ENCODE measurements at regions of chr1 and their contacts with region 1.

Region 1: DNA sequence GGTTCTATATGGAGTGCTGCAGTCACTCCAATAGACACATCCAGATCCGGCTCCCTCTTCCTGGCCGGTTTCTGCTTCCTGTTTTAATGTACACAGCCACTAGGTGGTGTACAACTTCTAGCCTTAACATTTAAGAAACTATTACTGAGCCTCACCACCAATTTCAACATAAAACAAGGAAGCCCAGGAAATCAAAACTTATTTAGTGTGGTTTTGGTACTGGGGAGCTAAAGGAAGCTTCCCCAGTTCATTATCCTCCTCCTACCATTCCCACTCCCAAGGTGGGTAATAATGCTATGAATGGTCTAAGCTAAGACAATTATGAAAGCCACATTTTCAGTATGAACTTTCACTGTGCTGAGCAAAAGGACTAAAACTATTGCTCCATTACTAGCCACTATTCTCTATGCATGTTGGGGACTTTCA is 25.5 kb upstream of the MTMR11 start:
- DNase-seq: peak; percentile 52
- ATAC-seq: peak; percentile 71
- H3K4me3 Mint-ChIP-seq: no peak overlapping the region
- H3K27ac Mint-ChIP-seq: no peak overlapping the region
- H3K4me1 Mint-ChIP-seq: peaks cover 13% of the 10 kb centered on the region
- H3K27me3 Mint-ChIP-seq: no peaks in the 10 kb centered on the region

Region 2: GRCh38 chr1:149927503-149928387 is 34.4 kb before region 1 on chr1 and contains the start of gene SF3B4:
- CTCF ChIA-PET with region 1: interaction called, 12 read pairs
- POLR2A ChIA-PET with region 1: interaction called, 3 read pairs
- intact Hi-C with region 1: no loop called
- DNase-seq: peak; percentile 97
- ATAC-seq: peak; percentile 97
- H3K4me3 Mint-ChIP-seq: peak within 1 kb of the TSS; percentile 97
- H3K27ac Mint-ChIP-seq: peak within 1 kb of the TSS; percentile 96
- H3K4me1 Mint-ChIP-seq: peaks cover 43% of the 10 kb centered on the region
- H3K27me3 Mint-ChIP-seq: peaks cover 3% of the 10 kb centered on the region
- total RNA-seq, gene SF3B4: 68.6 to 71.9 TPM

Region 3: DNA sequence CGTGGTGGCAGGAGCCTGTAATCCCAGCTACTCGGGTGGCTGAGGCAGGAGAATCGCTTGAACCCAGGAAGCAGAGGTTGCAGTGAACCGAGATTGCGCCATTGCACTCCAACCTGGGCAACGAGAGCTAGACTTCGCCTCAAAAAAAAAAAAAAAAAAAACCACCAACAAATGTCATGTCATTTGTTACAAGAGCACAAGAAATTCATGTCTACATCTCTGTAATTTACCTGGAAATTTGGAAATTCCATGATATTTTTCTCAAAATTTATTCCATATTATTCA is 88.9 kb after region 1 on chr1:
- CTCF ChIA-PET with region 1: interaction called, 31 read pairs
- POLR2A ChIA-PET with region 1: no interaction called
- intact Hi-C with region 1: loop called (anchors 1 kb)
- DNase-seq: no peak
- ATAC-seq: no peak
- H3K4me3 Mint-ChIP-seq: no peak overlapping the region
- H3K27ac Mint-ChIP-seq: no peak overlapping the region
- H3K4me1 Mint-ChIP-seq: peaks cover 2% of the 10 kb centered on the region
- H3K27me3 Mint-ChIP-seq: peaks cover 3% of the 10 kb centered on the region

Region 4: GRCh38 chr1:150168960-150169601 is 206.9 kb after region 1 on chr1:
- CTCF ChIA-PET with region 1: interaction called, 5 read pairs
- POLR2A ChIA-PET with region 1: no interaction called
- intact Hi-C with region 1: loop called (anchors 1 to 2 kb)
- DNase-seq: peak; percentile 76
- ATAC-seq: peak; percentile 73
- H3K4me3 Mint-ChIP-seq: no peak overlapping the region
- H3K27ac Mint-ChIP-seq: no peak overlapping the region
- H3K4me1 Mint-ChIP-seq: no peaks in the 10 kb centered on the region
- H3K27me3 Mint-ChIP-seq: no peaks in the 10 kb centered on the region

Region 5: DNA sequence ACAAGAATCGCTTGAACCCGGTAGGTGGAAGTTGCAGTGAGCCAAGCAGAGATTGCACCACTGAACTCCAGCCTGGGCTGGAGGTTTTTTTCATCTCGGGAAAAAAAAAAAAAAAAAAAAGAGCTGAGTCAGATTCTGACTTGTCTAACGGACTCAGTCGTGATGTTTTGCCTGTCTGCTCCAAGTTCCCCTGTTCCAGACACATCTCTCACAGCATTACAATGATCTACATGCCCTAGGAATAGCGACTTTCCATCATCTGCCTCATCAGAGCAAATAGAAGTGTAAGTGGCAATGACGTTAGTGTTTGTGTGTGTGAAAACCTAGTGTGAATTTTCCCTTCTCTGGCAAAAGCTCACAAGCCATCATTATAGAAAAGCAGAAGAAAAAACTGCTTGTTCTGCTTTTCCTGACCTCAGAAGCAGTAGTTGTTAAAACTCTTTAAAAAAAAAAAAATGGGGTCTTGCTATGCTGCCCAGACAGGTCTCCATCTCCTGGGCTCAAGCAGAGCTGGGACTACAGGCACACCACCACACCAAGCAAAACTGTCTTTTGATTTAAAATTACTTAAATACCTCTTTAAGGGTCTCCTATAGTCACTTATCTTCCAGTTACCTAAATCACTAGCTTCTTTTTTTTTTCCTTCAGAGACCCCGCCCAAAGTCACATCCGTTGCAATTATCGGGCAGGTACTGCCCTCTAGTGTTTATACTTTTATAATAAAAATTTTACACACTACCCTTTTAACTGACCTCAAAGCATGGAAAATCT is 224.8 kb after region 1 on chr1:
- CTCF ChIA-PET with region 1: interaction called, 12 read pairs
- POLR2A ChIA-PET with region 1: interaction called, 3 read pairs
- intact Hi-C with region 1: loop called (anchors 1 to 5 kb)
- DNase-seq: peak; percentile 17
- ATAC-seq: peak; percentile 82
- H3K4me3 Mint-ChIP-seq: no peak overlapping the region
- H3K27ac Mint-ChIP-seq: peak overlapping the region; percentile 13
- H3K4me1 Mint-ChIP-seq: peaks cover 10% of the 10 kb centered on the region
- H3K27me3 Mint-ChIP-seq: no peaks in the 10 kb centered on the region

Measured in activated CD4-positive, alpha-beta T cell treated with anti-CD3 and anti-CD28 coated beads for 36 hours (primary cell).